AG04450 (cell line): ENCODE measurements at regions of chr7 and their contacts with region 1.

Region 1: DNA sequence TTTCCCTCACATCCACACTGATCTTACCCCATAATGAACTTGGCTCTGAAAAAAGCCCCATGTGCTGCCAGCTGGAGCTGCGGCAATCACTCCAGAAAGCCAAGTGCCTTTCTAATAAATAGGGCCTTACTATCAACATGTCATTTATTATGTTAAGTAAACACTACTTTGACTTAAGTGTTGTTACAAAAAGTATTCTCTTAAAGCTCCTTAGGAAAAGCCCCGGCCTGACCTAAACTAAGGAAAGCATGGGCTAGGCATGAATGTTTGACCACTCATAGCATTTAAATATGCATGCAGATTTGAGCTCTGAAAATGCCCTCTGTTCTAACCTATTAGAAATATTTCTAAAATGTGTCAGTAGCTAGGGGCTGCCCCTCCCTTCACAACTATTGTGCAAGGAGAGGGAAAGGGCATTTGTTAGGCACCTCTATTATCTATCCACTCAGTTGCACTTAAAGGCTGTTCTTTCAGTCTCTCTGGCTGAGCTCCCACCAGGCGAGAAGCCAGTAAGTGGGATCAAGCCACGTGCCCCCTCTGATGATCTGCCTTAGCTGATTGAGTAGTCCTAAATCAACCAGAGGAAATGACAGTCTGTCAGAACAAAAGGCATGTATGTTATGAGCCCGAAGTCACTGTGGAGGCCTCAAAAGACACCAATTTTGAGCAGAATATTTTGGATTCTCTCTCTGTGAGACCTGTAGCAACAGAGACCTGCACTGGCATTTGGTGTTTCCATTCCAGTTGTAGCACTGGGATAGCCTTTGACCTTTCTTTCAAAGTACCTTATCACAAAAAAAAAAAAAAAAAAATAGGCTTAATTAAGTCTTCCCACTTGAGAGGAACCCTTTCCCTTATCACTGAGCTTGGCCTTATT is 77.1 kb downstream of the ITGB8 start:
- DNase-seq: no peak
- H3K4me3 ChIP-seq: no peak overlapping the region
- H3K27ac ChIP-seq: no peak overlapping the region
- H3K27me3 ChIP-seq: no peaks in the 10 kb centered on the region
- CTCF ChIP-seq: no peak

Region 2: DNA sequence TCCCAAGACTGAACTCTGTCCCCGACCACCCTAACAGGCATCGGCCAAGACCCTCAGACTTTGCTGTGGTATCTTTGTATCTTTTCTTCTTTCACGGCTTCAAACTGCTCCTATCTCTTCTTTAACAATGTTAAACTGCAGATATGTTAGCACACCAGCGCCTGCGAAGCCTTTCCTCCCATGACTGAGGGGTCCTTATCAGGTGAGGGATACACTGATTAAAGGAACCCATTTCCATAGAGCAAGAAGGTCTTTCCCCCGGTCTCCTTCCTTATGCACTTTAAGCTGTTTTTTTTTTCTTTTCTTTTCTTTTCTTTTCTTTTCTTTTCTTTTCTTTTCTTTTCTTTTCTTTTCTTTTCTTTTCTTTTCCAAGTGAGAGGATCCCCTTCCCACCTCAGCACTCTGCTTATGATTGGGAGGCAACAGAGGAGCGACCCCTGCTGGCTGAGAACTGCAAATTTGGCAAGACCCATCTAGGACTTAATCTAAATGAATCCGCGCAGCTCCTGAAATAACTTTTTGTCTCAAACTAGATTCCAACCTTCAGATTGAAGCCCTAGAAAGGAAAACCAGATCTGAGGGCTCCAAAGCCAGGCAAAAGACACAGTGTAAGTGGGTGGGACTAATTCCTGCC is 32.8 kb after region 1 on chr7:
- CTCF ChIA-PET with region 1: interaction called, 10 read pairs
- POLR2A ChIA-PET with region 1: no interaction called
- DNase-seq: peak; percentile 20
- H3K4me3 ChIP-seq: no peak overlapping the region
- H3K27ac ChIP-seq: no peak overlapping the region
- H3K27me3 ChIP-seq: no peaks in the 10 kb centered on the region
- CTCF ChIP-seq: peak; percentile 65